Heart left ventricle (tissue), 16 donors: ENCODE measurements at regions of chr5 and their contacts with region 1.

Region 1: GRCh38 chr5:157761690-157762621 is 18.4 kb downstream of the LSM11 start:
- DNase-seq: no peak
- ATAC-seq: peak; percentile 32 to 86 (median 77)
- H3K4me3 ChIP-seq: no peak overlapping the region
- H3K27ac ChIP-seq: no peak overlapping the region
- H3K4me1 ChIP-seq: peaks cover 0 to 6% (median 0%) of the 10 kb centered on the region in 12 donors
- H3K27me3 ChIP-seq: no peaks in the 10 kb centered on the region
- CTCF ChIP-seq: peak; percentile 62 to 83 (median 78)
- POLR2A ChIP-seq: no peak

Region 2: DNA sequence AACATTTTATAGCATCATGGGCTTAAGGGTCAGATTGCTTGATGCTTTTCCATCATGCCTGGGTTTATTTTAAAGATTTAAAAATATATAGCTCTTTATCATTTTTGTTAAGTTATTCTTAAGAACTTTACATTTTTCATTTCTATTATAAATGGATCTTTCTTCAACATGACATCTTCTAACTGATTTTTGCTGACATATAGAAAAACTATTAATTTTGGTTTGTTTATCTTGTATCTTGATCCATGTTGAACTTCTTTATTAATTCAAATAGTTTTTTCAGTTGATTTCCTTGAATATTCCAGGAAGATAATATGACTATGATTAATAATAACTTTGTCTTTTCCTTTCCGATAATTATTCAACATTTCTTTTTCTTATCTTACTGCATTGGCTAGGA is 334.9 kb after region 1 on chr5:
- intact Hi-C with region 1: no loop called
- DNase-seq: no peak
- ATAC-seq: no peak
- H3K4me3 ChIP-seq: no peak overlapping the region
- H3K27ac ChIP-seq: no peak overlapping the region
- H3K4me1 ChIP-seq: no peaks in the 10 kb centered on the region
- H3K27me3 ChIP-seq: no peaks in the 10 kb centered on the region
- CTCF ChIP-seq: no peak
- POLR2A ChIP-seq: no peak

Region 3: DNA sequence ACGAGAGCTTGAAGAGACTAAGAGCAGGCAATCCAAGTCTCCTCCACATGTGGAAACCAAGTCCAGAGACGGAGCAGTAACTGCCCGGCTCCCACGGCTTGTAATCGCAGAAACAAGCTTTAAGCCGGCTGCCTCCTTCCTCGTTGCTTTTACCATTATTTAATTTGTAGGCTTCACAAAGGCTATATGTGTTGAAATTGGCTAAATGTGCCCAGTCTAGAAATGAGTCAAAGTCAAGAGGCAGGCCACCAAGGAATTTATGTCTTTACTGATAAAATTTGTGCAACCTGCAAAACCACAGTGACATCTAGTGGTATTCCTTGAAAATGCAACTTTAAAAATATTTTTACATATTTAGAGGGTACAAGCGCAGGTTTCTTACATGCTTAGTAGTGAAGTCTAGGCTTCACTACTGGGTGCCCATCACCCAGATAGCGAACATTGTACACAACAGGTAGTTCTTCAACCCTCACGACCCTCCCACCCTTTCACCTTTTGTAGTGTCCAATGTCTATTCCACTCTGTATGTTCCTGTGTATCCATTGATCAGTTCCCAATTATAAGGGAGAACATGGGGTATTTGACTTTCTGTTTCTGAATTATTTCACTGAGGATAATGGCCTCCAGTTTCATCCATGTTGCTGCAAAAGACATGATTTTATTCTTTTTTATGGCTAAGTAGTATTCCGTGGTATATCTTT is 1371.2 kb after region 1 on chr5:
- intact Hi-C with region 1: loop called in 9 of 10 experiments (anchors 2 to 10 kb)
- DNase-seq: no peak
- ATAC-seq: peak in 3 of 4 donors; percentile 44 to 78 (median 58)
- H3K4me3 ChIP-seq: peak overlapping the region in 8 of 12 donors; percentile 6 to 41 (median 28)
- H3K27ac ChIP-seq: peak overlapping the region in 1 of 12 donors; percentile 25
- H3K4me1 ChIP-seq: peaks cover 0 to 8% (median 0%) of the 10 kb centered on the region in 12 donors
- H3K27me3 ChIP-seq: peaks cover 0 to 7% (median 0%) of the 10 kb centered on the region in 9 donors
- CTCF ChIP-seq: peak; percentile 74 to 88 (median 82)
- POLR2A ChIP-seq: no peak